Dorsolateral prefrontal cortex (tissue), 120 donors: ENCODE measurements at regions of chr17 and their contacts with region 1.

Region 1: GRCh38 chr17:74271901-74272561 is 2.0 kb upstream of the DNAI2 start:
- DNase-seq: peak; percentile 28 to 96 (median 90)
- H3K4me3 ChIP-seq: peak overlapping the region in 12 of 59 donors; percentile 1 to 29 (median 14)
- H3K27ac ChIP-seq: peak overlapping the region in 56 of 59 donors; percentile 18 to 90 (median 82)
- H3K27me3 ChIP-seq: peaks cover 0 to 6% (median 0%) of the 10 kb centered on the region in 45 donors
- CTCF ChIP-seq: peak in 24 of 56 donors; percentile 11 to 51 (median 24)

Region 2: GRCh38 chr17:74245145-74245831 is 26.7 kb before region 1 on chr17:
- intact Hi-C with region 1: loop called in 1 of 2 experiments (anchors 1 kb)
- DNase-seq: peak; percentile 40 to 97 (median 93)
- H3K4me3 ChIP-seq: peak overlapping the region in 8 of 59 donors; percentile 3 to 40 (median 12)
- H3K27ac ChIP-seq: peak overlapping the region; percentile 76 to 100 (median 98)
- H3K27me3 ChIP-seq: no peaks in the 10 kb centered on the region
- CTCF ChIP-seq: peak in 8 of 56 donors; percentile 7 to 40 (median 22)

Region 3: GRCh38 chr17:74354123-74354522 is 82.1 kb after region 1 on chr17:
- intact Hi-C with region 1: no loop called
- DNase-seq: peak in 2 of 10 donors; percentile 53 to 62
- H3K4me3 ChIP-seq: no peak overlapping the region
- H3K27ac ChIP-seq: peak overlapping the region in 3 of 59 donors; percentile 17 to 51 (median 26)
- H3K27me3 ChIP-seq: peaks cover 0 to 75% (median 28%) of the 10 kb centered on the region in 45 donors
- CTCF ChIP-seq: peak in 50 of 56 donors; percentile 19 to 71 (median 48)